ENCODE measurements at regions of chr15 and their contacts with region 1.

Region 1: GRCh38 chr15:65818927-65819562 is 27.0 kb upstream of the DENND4A start:
- DNase-seq: peak in 3 of 4 experiments; percentile 41 to 55 (median 44)
- ATAC-seq: peak; percentile 46
- H3K4me3 ChIP-seq: no peak overlapping the region
- H3K27ac ChIP-seq: peak overlapping the region; percentile 83
- H3K4me1 ChIP-seq: peaks cover 16 to 31% of the 10 kb centered on the region in 2 experiments
- H3K27me3 ChIP-seq: no peaks in the 10 kb centered on the region
- CTCF ChIP-seq: no peak
- EP300 ChIP-seq: 0 out of 2 replicates have a peak, but pooled peaks have one; percentile 42
- POLR2A ChIP-seq: no peak
- RAD21 ChIP-seq: no peak

Region 2: DNA sequence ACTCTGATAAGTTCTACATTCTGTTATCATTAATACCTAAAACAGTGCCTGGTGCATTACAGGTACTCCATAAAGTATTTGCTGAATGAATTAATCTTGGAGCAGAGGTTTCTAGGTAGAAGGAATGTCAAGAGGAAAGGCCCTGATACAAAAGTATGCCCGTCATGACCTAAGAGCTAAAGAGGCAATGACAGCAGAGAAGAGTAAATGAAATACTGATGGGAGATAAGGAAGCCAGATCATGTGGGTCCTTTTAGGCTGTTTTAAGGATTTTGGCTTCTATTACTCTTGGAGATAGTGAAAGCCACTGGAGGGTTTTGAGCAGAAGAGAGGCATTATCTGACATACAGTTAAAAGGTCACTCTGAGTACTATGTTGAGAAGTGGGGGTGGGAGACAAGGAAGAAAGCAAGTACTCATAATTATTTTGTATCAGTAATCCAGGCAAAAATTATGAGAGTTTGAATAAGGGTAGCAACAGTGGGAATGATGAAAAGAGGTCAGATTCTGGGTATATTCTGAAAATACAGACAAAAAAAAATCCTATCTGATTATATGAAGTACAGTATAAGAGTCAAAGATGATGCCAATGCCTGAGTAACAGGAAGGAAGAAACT is 75.3 kb before region 1 on chr15:
- CTCF ChIA-PET with region 1: no interaction called
- POLR2A ChIA-PET with region 1: no interaction called
- in situ Hi-C with region 1: no loop called
- intact Hi-C with region 1: loop called (anchors 5 kb)
- DNase-seq: peak in 2 of 4 experiments; percentile 31 to 54
- ATAC-seq: peak; percentile 80
- H3K4me3 ChIP-seq: no peak overlapping the region
- H3K27ac ChIP-seq: peak overlapping the region; percentile 9; the same call in 1 of the 3 replicates
- H3K4me1 ChIP-seq: peaks cover 12 to 19% of the 10 kb centered on the region in 2 experiments; a peak in 4 of 5 replicates
- H3K27me3 ChIP-seq: no peaks in the 10 kb centered on the region
- CTCF ChIP-seq: no peak
- EP300 ChIP-seq: no peak
- POLR2A ChIP-seq: no peak
- RAD21 ChIP-seq: peak; percentile 16 to 29; a peak in 2 of 4 replicates

Region 3: DNA sequence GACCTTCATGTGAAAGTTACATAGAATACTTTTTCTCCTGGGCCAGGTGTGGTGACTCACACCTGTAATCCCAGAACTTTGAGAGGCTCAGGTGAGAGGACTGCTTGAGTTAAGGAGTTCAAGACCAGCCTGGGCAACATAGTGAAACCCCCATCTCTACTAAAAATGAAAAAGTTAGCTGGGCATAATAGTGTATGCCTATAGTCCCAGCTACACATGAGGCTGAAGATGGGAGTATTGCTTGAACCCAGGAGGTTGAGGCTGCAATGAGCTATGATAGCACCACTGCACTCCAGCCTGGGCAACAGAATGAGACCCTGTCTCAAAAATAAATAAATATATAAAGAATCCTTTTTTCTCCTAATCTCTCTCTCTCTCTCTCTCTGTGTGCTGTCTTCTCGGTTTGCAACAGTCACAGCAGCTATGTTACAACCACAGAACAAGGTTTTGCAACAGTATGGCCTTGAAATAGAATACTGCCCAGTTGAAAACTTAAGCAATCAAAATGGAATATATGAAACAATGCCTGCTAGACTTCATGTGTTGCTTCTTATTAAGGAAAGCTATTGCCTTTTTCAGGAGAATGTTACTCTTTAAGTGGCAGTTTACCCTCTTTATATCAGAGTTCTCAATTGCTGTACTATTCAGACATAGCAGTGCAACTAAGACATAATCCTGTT is 14.7 kb before region 1 on chr15:
- CTCF ChIA-PET with region 1: no interaction called
- POLR2A ChIA-PET with region 1: interaction called, 6 read pairs
- in situ Hi-C with region 1: no loop called
- intact Hi-C with region 1: loop called (anchors 1 kb)
- DNase-seq: no peak
- ATAC-seq: peak; percentile 26
- H3K4me3 ChIP-seq: no peak overlapping the region
- H3K27ac ChIP-seq: peak overlapping the region; percentile 58
- H3K4me1 ChIP-seq: peaks cover 6 to 36% of the 10 kb centered on the region in 2 experiments; a peak in 3 of 5 replicates
- H3K27me3 ChIP-seq: no peaks in the 10 kb centered on the region
- CTCF ChIP-seq: no peak
- EP300 ChIP-seq: no peak
- POLR2A ChIP-seq: no peak
- RAD21 ChIP-seq: no peak

Region 4: DNA sequence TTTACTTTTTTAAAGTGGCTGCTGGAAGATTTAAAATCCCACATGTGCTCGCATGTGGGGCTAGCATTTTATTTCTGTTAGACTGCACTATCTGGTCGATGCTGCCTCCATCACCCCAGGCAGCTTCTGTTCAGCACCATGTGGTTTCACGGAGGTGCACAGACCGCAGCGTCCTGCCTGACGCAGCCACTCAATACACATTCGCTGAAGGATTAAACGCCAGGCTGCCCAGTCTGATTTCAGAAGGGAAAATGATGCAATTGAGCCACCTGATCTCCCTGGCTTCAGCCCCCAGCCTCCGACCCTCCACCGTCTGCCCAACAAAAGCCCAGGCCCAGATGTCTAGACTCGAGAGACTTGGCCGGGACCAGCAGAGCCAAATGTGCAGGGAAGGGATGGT is 350.0 kb after region 1 on chr15:
- CTCF ChIA-PET with region 1: no interaction called
- POLR2A ChIA-PET with region 1: no interaction called
- in situ Hi-C with region 1: no loop called
- intact Hi-C with region 1: no loop called
- DNase-seq: no peak
- ATAC-seq: no peak
- H3K4me3 ChIP-seq: no peak overlapping the region
- H3K27ac ChIP-seq: no peak overlapping the region
- H3K4me1 ChIP-seq: no peaks in the 10 kb centered on the region; a peak in 1 of 5 replicates
- H3K27me3 ChIP-seq: peaks cover 50 to 91% of the 10 kb centered on the region in 2 experiments
- CTCF ChIP-seq: no peak
- EP300 ChIP-seq: no peak
- POLR2A ChIP-seq: no peak
- RAD21 ChIP-seq: no peak